ENCODE measurements at regions of chr2 and their contacts with region 1.

Region 1: GRCh38 chr2:111883661-111884591 is at the start of gene ANAPC1:
- H3K4me3 ChIP-seq: peak within 1 kb of the TSS; percentile 88
- H3K27ac ChIP-seq: peak within 1 kb of the TSS; percentile 91
- H3K4me1 ChIP-seq: no peaks in the 10 kb centered on the region
- CTCF ChIP-seq: peak; percentile 76

Region 2: DNA sequence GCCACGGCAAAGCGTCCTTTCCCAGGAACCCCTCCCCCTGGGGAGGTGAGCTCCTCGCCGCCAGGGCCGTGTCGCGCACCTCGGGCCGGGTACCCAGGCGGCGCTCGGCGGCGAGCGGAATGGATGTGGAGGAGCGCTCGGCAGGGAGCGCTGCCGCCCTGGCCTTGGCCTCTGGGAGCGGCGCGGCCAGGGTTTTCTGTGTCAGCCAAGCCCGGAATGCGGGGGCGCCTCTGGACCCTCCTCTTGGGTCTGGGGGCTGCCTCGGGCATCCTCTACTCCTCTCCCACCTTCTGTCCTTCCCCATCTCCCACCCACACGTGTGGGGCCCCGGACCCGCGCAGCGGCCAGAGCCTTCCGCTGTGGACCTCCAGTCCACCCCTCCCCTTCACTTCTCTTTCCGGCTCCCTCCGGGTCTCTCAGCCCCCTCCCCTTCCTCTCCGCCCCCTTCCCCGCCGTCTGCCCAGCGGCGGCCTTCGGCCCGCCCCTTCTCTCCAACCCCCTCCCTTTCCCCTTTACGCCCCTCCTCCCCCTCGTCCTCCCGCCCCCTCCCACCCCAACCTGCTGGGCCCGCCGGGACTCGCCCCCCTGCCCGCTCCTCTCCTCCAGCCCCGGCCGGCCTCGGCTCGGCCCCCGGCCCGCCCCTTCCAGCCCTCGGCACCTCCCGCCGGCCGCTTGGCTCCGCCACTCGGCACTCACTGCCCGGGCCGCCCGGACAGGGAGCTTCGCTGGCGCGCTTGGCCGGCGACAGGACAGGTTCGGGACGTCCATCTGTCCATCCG is 14.2 kb after region 1 on chr2 and contains the start of gene MERTK:
- CTCF ChIA-PET with region 1: interaction called, 14 read pairs
- POLR2A ChIA-PET with region 1: interaction called, 9 read pairs
- H3K4me3 ChIP-seq: peak within 1 kb of the TSS; percentile 75
- H3K27ac ChIP-seq: peak within 1 kb of the TSS; percentile 76; the same call in 1 of the 2 replicates
- H3K4me1 ChIP-seq: peaks cover 10% of the 10 kb centered on the region; the same call in 1 of the 2 replicates
- CTCF ChIP-seq: peak; percentile 97

Region 3: GRCh38 chr2:112054847-112055729 is 171.2 kb after region 1 on chr2 and contains the start of gene TMEM87B:
- CTCF ChIA-PET with region 1: interaction called, 87 read pairs
- POLR2A ChIA-PET with region 1: interaction called, 15 read pairs
- H3K4me3 ChIP-seq: peak within 1 kb of the TSS; percentile 86
- H3K27ac ChIP-seq: peak within 1 kb of the TSS; percentile 87
- H3K4me1 ChIP-seq: peaks cover 6% of the 10 kb centered on the region
- CTCF ChIP-seq: no peak